ENCODE measurements at regions of chr3 and their contacts with region 1.

Region 1: GRCh38 chr3:40452876-40453730 is 4.0 kb upstream of the RPL14 start:
- DNase-seq: peak; percentile 96 to 99
- H3K4me3 ChIP-seq: peak overlapping the region; percentile 61 to 68
- H3K27ac ChIP-seq: peak overlapping the region; percentile 83 to 89
- H3K4me1 ChIP-seq: peaks cover 0 to 15% of the 10 kb centered on the region in 2 donors
- H3K27me3 ChIP-seq: no peaks in the 10 kb centered on the region
- CTCF ChIP-seq: no peak

Region 2: GRCh38 chr3:39383045-39383880 is 1069.8 kb before region 1 on chr3 and contains the start of gene SLC25A38:
- intact Hi-C with region 1: loop called (anchors 10 kb)
- DNase-seq: peak in 1 of 2 donors; percentile 89
- H3K4me3 ChIP-seq: peak within 1 kb of the TSS; percentile 60 to 70
- H3K27ac ChIP-seq: peak within 1 kb of the TSS; percentile 92 to 97
- H3K4me1 ChIP-seq: peaks cover 0 to 16% of the 10 kb centered on the region in 2 donors
- H3K27me3 ChIP-seq: no peaks in the 10 kb centered on the region
- CTCF ChIP-seq: peak; percentile 17 to 42 (median 39)
- total RNA-seq, gene SLC25A38: 7.0 TPM

Region 3: GRCh38 chr3:40476478-40477470 is 23.7 kb after region 1 on chr3 and contains the start of gene ZNF619:
- intact Hi-C with region 1: loop called (anchors 1 kb)
- DNase-seq: peak in 1 of 2 donors; percentile 85
- H3K4me3 ChIP-seq: peak within 1 kb of the TSS; percentile 65 to 96
- H3K27ac ChIP-seq: peak within 1 kb of the TSS; percentile 64 to 72
- H3K4me1 ChIP-seq: peaks cover 0 to 7% of the 10 kb centered on the region in 2 donors
- H3K27me3 ChIP-seq: no peaks in the 10 kb centered on the region
- CTCF ChIP-seq: no peak
- total RNA-seq, gene ZNF619: 1.4 TPM

Region 4: GRCh38 chr3:40524568-40525285 is 71.6 kb after region 1 on chr3 and contains the start of gene ZNF621:
- intact Hi-C with region 1: loop called (anchors 1 kb)
- DNase-seq: peak; percentile 57 to 94
- H3K4me3 ChIP-seq: peak within 1 kb of the TSS; percentile 83 to 88
- H3K27ac ChIP-seq: peak within 1 kb of the TSS; percentile 79 to 91
- H3K4me1 ChIP-seq: peaks cover 0 to 7% of the 10 kb centered on the region in 2 donors
- H3K27me3 ChIP-seq: no peaks in the 10 kb centered on the region
- CTCF ChIP-seq: no peak
- total RNA-seq, gene ZNF621: 8.2 TPM

Region 5: GRCh38 chr3:40971191-40972168 is 518.4 kb after region 1 on chr3:
- intact Hi-C with region 1: loop called (anchors 10 kb)
- DNase-seq: peak; percentile 52 to 88
- H3K4me3 ChIP-seq: no peak overlapping the region
- H3K27ac ChIP-seq: peak overlapping the region in 1 of 2 donors; percentile 42
- H3K4me1 ChIP-seq: peaks cover 5 to 7% of the 10 kb centered on the region in 2 donors
- H3K27me3 ChIP-seq: no peaks in the 10 kb centered on the region
- CTCF ChIP-seq: no peak

Region 6: DNA sequence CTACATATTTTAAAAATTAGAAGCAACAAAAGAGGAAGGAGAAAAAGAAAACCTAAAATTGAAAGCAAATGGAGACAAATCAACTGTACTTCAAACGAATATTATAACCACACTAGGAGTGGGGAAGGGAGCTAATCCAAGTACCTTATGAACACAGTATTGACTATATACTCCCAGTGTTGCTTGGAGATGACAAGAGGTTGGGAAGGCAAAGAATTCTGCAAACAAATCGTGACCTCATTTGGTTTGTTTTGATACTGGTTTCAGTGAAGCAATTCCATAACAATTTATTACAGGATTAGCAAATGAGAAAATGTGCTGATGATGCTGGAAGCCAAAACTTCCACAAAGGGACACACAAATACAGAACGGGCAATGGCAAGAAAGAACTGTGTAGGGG is 1240.7 kb after region 1 on chr3:
- intact Hi-C with region 1: no loop called
- DNase-seq: no peak
- H3K4me3 ChIP-seq: no peak overlapping the region
- H3K27ac ChIP-seq: no peak overlapping the region
- H3K4me1 ChIP-seq: peaks cover 0 to 3% of the 10 kb centered on the region in 2 donors
- H3K27me3 ChIP-seq: no peaks in the 10 kb centered on the region
- CTCF ChIP-seq: no peak

Region 7: GRCh38 chr3:41961750-41962679 is 1508.9 kb after region 1 on chr3 and contains the start of gene ULK4:
- intact Hi-C with region 1: loop called (anchors 10 kb)
- DNase-seq: peak; percentile 94 to 99
- H3K4me3 ChIP-seq: peak within 1 kb of the TSS; percentile 63 to 99
- H3K27ac ChIP-seq: peak within 1 kb of the TSS; percentile 73 to 89
- H3K4me1 ChIP-seq: peaks cover 0 to 9% of the 10 kb centered on the region in 2 donors
- H3K27me3 ChIP-seq: no peaks in the 10 kb centered on the region
- CTCF ChIP-seq: no peak
- total RNA-seq, gene ULK4: 4.2 TPM

Measured in ascending aorta (tissue), 2 donors.